ENCODE measurements at regions of chr1 and their contacts with region 1.

Region 1: DNA sequence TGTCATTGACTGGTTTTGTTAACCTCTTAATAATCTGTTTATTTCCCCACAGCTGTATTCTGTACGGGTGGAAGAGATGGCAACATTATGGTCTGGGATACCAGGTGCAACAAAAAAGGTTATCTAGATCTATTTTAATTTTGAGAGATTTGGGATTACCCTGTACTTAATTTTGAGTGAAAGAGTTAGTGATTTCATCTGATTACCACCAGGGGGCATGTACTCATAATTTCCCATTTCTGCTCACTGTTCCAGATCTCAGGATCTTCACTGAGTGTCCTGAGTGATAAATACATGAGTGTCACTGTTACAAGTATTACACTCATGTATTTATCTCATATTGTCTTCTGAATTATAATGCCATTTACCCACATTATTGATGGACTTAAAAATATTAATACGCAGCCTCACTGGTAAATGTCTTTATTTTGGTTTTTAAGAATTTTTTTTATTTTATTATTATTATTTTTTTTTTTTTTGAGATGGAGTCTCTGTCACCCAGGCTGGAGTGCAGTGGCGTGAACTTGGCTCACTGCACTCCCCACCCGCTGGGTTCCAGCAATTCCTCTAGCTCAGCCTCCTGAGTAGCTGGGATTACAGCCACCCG is 27.4 kb downstream of the DTL start:
- DNase-seq: peak; percentile 73
- H3K4me3 Mint-ChIP-seq: no peak overlapping the region
- H3K27ac Mint-ChIP-seq: no peak overlapping the region
- H3K4me1 Mint-ChIP-seq: peaks cover 12% of the 10 kb centered on the region
- H3K27me3 Mint-ChIP-seq: no peaks in the 10 kb centered on the region
- CTCF ChIP-seq: peak; percentile 84

Region 2: GRCh38 chr1:211680752-211681327 is 382.1 kb before region 1 on chr1:
- CTCF ChIA-PET with region 1: interaction called, 63 read pairs
- POLR2A ChIA-PET with region 1: interaction called, 3 read pairs
- intact Hi-C with region 1: loop called (anchors 2 kb)
- DNase-seq: peak; percentile 92
- H3K4me3 Mint-ChIP-seq: no peak overlapping the region
- H3K27ac Mint-ChIP-seq: peak overlapping the region; percentile 24
- H3K4me1 Mint-ChIP-seq: peaks cover 8% of the 10 kb centered on the region
- H3K27me3 Mint-ChIP-seq: no peaks in the 10 kb centered on the region
- CTCF ChIP-seq: peak; percentile 99

Region 3: GRCh38 chr1:212040629-212041028 is 22.3 kb before region 1 on chr1:
- CTCF ChIA-PET with region 1: interaction called, 59 read pairs
- POLR2A ChIA-PET with region 1: interaction called, 13 read pairs
- intact Hi-C with region 1: no loop called
- DNase-seq: peak; percentile 59
- H3K4me3 Mint-ChIP-seq: peak overlapping the region; percentile 24
- H3K27ac Mint-ChIP-seq: peak overlapping the region; percentile 25
- H3K4me1 Mint-ChIP-seq: peaks cover 57% of the 10 kb centered on the region
- H3K27me3 Mint-ChIP-seq: no peaks in the 10 kb centered on the region
- CTCF ChIP-seq: no peak

Region 4: GRCh38 chr1:212089560-212090163 is 26.7 kb after region 1 on chr1:
- CTCF ChIA-PET with region 1: interaction called, 23 read pairs
- POLR2A ChIA-PET with region 1: no interaction called
- intact Hi-C with region 1: no loop called
- DNase-seq: no peak
- H3K4me3 Mint-ChIP-seq: no peak overlapping the region
- H3K27ac Mint-ChIP-seq: no peak overlapping the region
- H3K4me1 Mint-ChIP-seq: peaks cover 8% of the 10 kb centered on the region
- H3K27me3 Mint-ChIP-seq: no peaks in the 10 kb centered on the region
- CTCF ChIP-seq: no peak

Region 5: GRCh38 chr1:212101735-212102134 is 38.8 kb after region 1 on chr1:
- CTCF ChIA-PET with region 1: no interaction called
- POLR2A ChIA-PET with region 1: no interaction called
- intact Hi-C with region 1: no loop called
- DNase-seq: no peak
- H3K4me3 Mint-ChIP-seq: no peak overlapping the region
- H3K27ac Mint-ChIP-seq: no peak overlapping the region
- H3K4me1 Mint-ChIP-seq: no peaks in the 10 kb centered on the region
- H3K27me3 Mint-ChIP-seq: no peaks in the 10 kb centered on the region
- CTCF ChIP-seq: no peak

Region 6: DNA sequence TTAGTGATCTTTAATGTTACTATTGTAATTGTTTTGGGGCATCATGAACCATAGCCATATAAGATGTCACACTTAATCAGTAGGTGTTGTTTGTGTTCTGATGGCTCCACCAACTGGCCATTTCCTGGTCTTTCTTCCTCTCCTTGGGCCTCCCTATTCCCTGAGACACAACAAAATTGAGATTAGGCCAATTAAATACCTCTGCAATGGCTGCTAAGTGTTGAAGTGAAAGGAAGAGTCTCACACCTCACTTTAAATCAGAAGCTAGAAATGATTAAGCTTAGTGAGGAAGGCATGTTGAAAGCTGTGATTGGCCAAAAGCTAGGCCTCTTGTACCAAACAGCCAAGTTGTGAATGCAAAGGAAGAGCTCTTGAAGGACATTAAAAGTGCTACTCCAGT is 253.0 kb after region 1 on chr1:
- CTCF ChIA-PET with region 1: interaction called, 54 read pairs
- POLR2A ChIA-PET with region 1: no interaction called
- intact Hi-C with region 1: loop called (anchors 2 kb)
- DNase-seq: peak; percentile 72
- H3K4me3 Mint-ChIP-seq: no peak overlapping the region
- H3K27ac Mint-ChIP-seq: peak overlapping the region; percentile 60
- H3K4me1 Mint-ChIP-seq: peaks cover 14% of the 10 kb centered on the region
- H3K27me3 Mint-ChIP-seq: no peaks in the 10 kb centered on the region
- CTCF ChIP-seq: peak; percentile 48

Region 7: DNA sequence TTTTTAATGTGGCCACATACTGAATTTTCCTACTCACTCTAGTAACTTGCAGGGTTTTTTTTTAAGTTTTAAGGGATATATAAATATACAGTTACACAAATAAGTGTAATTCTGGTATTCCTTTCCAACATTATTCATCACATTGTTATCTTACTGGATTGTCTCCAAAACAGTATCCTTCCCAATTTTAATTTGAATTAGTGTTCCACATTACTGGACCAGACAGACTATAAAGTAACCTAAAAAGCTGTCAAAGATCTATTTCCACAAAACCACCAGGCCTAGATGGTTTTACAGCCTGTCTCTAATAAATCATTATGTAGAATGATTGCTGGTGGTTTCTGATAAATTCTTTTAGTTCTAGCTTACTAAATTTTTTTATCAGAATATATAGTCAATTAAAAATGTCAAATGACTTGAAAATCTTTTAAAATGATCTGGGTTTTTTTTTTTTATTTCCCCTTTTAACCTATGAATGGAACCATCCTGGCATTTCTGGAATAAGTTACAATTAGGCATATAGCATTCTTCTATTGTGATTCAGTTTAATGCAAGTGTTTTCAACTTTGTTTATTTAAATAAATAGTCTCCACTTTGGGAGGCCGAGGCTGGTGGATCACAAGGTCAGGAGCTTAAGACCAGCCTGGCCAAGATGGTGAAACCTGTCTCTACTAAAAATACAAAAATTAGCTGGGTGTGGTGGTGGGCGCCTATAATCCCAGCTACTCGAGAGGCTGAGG is 292.5 kb after region 1 on chr1:
- CTCF ChIA-PET with region 1: interaction called, 38 read pairs
- POLR2A ChIA-PET with region 1: interaction called, 3 read pairs
- intact Hi-C with region 1: no loop called
- DNase-seq: no peak
- H3K4me3 Mint-ChIP-seq: no peak overlapping the region
- H3K27ac Mint-ChIP-seq: no peak overlapping the region
- H3K4me1 Mint-ChIP-seq: peaks cover 6% of the 10 kb centered on the region
- H3K27me3 Mint-ChIP-seq: no peaks in the 10 kb centered on the region
- CTCF ChIP-seq: no peak

Region 8: DNA sequence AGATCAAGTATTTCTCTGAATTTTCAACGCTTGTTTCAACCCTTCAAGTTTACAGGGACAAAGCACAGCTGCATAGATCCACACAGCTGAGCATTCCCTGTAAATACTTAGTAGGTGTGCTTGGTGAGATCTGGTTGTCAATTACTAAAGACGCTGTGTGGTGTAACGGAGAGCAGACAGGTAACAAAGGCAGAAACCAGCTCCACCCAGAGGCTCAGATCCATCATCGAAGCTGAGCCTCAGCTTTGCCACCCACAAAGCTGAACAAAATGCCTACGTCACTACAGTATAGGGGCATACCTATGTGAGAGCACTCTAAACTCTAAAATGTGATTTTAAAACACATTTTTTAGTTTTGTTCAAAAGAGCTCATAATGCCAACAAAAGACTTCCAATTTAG is 313.1 kb after region 1 on chr1:
- CTCF ChIA-PET with region 1: interaction called, 20 read pairs
- POLR2A ChIA-PET with region 1: no interaction called
- intact Hi-C with region 1: no loop called
- DNase-seq: no peak
- H3K4me3 Mint-ChIP-seq: no peak overlapping the region
- H3K27ac Mint-ChIP-seq: peak overlapping the region; percentile 6
- H3K4me1 Mint-ChIP-seq: no peaks in the 10 kb centered on the region
- H3K27me3 Mint-ChIP-seq: no peaks in the 10 kb centered on the region
- CTCF ChIP-seq: no peak